Cardiac septum (tissue), 1 donor: ENCODE measurements at regions of chr7 and their contacts with region 1.

Region 1: GRCh38 chr7:151782598-151783448 is 94.1 kb downstream of the PRKAG2 start:
- DNase-seq: peak; percentile 86

Region 2: DNA sequence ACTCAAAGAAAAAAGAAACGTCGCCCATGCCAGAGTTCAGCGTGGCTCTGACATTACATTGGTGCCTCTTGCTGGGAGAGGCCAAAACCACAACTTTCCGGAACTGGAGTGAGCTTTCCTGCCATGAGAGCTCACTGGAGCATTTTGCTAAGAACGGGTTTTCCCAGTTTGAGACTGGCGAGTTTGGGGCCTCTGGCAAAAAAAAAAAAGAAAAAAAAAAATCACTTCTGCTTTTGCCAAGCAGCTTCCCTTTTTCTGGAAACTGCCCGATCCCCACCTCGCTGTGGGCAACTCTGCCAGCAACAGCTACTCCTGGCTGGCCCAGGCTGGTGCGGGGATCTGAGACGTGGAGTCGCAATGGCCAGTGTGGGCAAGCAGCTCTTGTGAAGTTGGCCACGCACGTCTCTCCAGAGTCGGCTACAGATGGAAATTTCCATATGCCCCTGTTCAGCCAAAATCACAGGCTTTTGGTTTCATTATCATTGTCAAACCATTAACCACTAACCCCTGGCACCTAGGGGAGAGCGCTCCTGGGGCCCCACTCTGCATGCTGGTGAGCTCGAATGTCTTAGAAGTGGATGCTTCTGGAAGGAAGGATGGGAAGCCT is 68.4 kb after region 1 on chr7:
- intact Hi-C with region 1: loop called (anchors 10 kb)
- DNase-seq: peak; percentile 83

Region 3: GRCh38 chr7:151888079-151889067 is 105.5 kb after region 1 on chr7:
- intact Hi-C with region 1: loop called (anchors 10 kb)
- DNase-seq: no peak

Region 4: DNA sequence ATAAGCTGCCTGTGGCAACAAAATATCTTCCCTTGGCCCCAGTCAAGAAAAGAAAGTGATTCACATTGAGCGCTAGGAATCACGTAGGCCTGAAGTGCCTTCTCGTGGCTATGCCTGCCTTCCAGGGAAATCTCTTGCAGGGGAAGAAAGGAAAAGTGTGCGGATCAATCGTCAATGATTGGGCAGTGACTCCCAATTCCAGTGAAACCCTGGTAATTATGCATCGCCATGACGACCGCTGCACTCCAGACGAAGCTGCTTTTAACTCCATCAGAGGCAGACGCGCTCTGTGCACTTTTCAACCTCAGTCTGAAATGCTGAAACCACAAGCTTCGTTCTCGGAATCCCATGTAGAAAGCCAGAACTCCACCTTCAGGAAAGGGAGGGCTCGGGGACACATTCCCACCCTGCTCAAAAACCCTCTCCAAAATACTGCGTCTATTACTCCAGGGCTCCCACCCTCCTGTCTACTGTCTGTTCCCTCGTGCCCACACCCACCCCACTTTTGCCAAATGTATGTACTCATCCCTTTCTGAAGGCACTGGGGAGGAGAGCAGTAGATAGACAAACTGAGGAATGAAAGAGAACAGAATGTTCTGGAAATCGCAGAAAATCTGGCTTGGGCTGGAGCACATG is 118.3 kb after region 1 on chr7:
- intact Hi-C with region 1: no loop called
- DNase-seq: no peak

Region 5: GRCh38 chr7:151932358-151932876 is 149.6 kb after region 1 on chr7:
- intact Hi-C with region 1: loop called (anchors 2 kb)
- DNase-seq: no peak

Region 6: DNA sequence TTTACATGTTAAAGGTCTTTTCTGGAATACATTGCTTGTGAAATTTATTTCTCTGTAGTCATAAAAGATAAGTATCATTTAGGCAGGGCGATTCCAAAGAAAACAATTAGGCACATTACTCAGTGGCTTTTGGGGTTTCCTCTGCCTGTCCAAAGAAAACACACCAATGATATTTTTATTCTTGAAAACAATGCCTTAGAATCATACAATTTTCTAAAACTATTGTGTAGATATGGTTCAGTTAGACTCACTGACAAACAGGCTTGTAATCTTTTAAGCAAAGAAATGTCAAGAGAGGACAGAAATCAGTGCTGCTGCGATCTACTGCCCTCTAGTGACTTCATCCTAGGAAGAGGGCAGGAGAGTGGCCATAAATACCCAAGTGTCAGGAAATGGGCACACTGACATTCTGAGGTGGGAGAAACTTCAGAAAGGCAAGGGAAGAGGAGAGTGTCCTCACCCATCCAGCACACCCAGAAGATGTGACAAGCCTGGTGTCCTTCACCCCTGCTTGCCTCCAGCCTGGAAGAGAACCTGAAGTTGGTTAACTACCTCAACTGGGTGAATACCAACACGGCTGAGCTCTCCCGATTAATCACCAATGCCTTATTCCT is 363.1 kb after region 1 on chr7:
- intact Hi-C with region 1: loop called (anchors 10 kb)
- DNase-seq: no peak